Activated CD8-positive, alpha-beta T cell treated with anti-CD3 and anti-CD28 coated beads, Interleukin-2, amount 10 ng/mL, durations not matched to agents 7 days and 5 days (primary cell): ENCODE measurements at regions of chr6 and their contacts with region 1.

Region 1: DNA sequence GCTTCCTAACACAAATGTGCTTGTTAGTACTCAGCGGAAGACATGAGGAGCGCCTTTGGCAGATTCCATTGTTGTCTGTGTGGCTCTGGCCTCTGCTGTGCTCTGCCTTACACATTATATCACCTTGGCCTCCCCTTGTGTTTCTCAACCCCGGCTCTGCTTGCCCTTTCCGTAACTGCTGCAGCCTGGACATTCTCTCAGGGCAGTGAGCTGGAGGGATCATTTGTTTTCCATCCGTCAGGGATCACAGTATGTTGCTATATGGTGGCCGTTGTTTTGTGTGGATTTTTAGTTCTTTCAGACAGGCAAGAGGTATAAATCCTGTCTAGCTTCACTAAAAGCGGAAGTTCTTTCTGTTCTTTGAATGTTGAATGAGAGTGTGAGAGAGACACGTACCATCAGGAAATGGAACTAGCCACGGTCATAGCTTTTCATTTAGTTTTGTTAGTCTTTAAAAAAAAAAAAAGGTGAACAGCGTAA is 175.1 kb downstream of the JARID2 start:
- DNase-seq: no peak
- ATAC-seq: peak; percentile 69
- H3K4me3 Mint-ChIP-seq: peak overlapping the region; percentile 61
- H3K27ac Mint-ChIP-seq: peak overlapping the region; percentile 97
- H3K4me1 Mint-ChIP-seq: peaks cover 61% of the 10 kb centered on the region
- H3K27me3 Mint-ChIP-seq: no peaks in the 10 kb centered on the region

Region 2: GRCh38 chr6:15327271-15327670 is 93.7 kb before region 1 on chr6:
- CTCF ChIA-PET with region 1: interaction called, 10 read pairs
- POLR2A ChIA-PET with region 1: no interaction called
- DNase-seq: peak; percentile 73
- ATAC-seq: peak; percentile 74
- H3K4me3 Mint-ChIP-seq: no peak overlapping the region
- H3K27ac Mint-ChIP-seq: peak overlapping the region; percentile 80
- H3K4me1 Mint-ChIP-seq: peaks cover 89% of the 10 kb centered on the region
- H3K27me3 Mint-ChIP-seq: no peaks in the 10 kb centered on the region

Region 3: GRCh38 chr6:15431762-15432483 is 10.9 kb after region 1 on chr6:
- CTCF ChIA-PET with region 1: interaction called, 22 read pairs
- POLR2A ChIA-PET with region 1: interaction called, 5 read pairs
- DNase-seq: no peak
- ATAC-seq: no peak
- H3K4me3 Mint-ChIP-seq: no peak overlapping the region
- H3K27ac Mint-ChIP-seq: peak overlapping the region; percentile 61
- H3K4me1 Mint-ChIP-seq: peaks cover 84% of the 10 kb centered on the region
- H3K27me3 Mint-ChIP-seq: no peaks in the 10 kb centered on the region

Region 4: DNA sequence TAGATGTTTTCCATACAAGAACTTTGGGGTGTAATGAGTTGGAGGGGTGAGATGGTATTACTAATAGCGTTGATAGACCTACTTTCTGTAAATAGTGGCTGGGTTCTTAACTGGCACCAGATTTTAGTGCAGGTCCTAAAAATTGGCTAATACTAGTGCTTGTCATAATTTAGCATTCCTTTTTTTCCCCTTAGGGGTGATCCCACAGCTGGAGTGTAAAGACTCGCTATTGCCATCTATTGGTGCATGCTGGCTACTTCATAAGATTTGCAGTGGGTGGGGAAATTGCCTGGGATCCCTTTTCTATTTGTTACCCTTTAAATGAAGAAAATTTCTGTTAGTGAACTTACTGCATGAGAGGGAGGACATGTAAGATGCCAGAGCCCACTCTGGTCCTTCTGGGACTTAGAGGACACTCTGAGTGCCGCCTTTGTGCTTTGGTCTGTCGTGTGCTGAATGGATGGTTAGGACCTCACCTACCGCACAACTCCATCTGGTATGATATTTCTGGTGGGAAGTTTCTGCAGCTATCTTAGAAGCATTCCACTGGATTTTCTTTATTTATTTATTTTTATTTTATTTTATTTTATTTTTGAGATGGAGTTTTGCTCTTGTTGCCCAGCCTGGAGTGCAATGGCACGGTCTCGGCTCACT is 20.3 kb after region 1 on chr6:
- CTCF ChIA-PET with region 1: interaction called, 40 read pairs
- POLR2A ChIA-PET with region 1: interaction called, 5 read pairs
- DNase-seq: peak; percentile 53
- ATAC-seq: no peak
- H3K4me3 Mint-ChIP-seq: no peak overlapping the region
- H3K27ac Mint-ChIP-seq: no peak overlapping the region
- H3K4me1 Mint-ChIP-seq: peaks cover 74% of the 10 kb centered on the region
- H3K27me3 Mint-ChIP-seq: no peaks in the 10 kb centered on the region